ENCODE measurements at regions of chr21 and their contacts with region 1.

Region 1: GRCh38 chr21:23950344-23950743 is 1656.9 kb downstream of the MRPL39 start:
- DNase-seq: no peak
- ATAC-seq: no peak
- H3K4me3 ChIP-seq: no peak overlapping the region
- H3K27ac ChIP-seq: no peak overlapping the region
- H3K4me1 ChIP-seq: no peaks in the 10 kb centered on the region
- H3K27me3 ChIP-seq: no peaks in the 10 kb centered on the region
- CTCF ChIP-seq: no peak
- POLR2A ChIP-seq: no peak
- RAD21 ChIP-seq: no peak

Region 2: DNA sequence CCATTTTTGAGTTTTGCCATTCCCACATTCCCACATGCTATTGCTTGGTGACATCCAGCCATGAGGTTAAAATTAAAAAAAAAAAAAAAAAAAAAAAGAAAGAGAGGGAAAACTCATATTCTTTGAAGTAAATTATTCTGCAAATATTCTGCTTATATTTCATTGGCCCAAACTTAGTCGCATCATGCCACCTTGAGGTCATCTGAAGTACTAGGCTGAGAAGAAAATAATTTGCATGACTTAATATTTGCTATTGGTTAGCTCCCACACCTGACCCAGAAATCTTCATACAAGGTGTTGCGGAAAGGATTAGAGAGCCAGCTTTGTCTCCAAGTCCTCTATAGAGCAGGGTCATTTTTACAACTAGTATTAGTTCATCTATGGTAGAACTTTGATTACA is 549.1 kb before region 1 on chr21:
- CTCF ChIA-PET with region 1: no interaction called
- POLR2A ChIA-PET with region 1: no interaction called
- dilution Hi-C with region 1: no loop called
- in situ Hi-C with region 1: no loop called
- intact Hi-C with region 1: no loop called
- DNase-seq: no peak
- ATAC-seq: no peak
- H3K4me3 ChIP-seq: no peak overlapping the region
- H3K27ac ChIP-seq: no peak overlapping the region
- H3K4me1 ChIP-seq: no peaks in the 10 kb centered on the region
- H3K27me3 ChIP-seq: no peaks in the 10 kb centered on the region
- CTCF ChIP-seq: no peak
- POLR2A ChIP-seq: no peak
- RAD21 ChIP-seq: no peak

Region 3: DNA sequence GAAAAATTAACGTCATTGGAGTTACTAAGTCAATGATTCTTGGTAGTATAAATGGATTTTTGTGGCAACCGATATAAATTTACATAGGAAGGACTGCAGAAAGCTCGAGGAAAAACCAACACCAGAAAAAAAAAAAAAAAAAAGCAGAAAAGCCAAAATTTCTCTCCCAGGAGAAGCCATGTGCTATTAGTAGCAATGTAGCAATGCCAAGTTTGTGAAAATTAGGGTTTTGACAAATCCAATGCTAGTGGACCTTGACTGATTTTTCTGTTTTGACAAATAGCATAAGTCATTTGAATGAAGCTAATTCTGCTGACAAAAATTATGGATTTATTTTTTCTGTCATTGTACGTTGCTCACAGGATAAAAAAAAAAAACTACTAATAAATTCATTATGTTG is 95.0 kb after region 1 on chr21:
- CTCF ChIA-PET with region 1: no interaction called
- POLR2A ChIA-PET with region 1: interaction called, 15 read pairs
- dilution Hi-C with region 1: no loop called
- in situ Hi-C with region 1: no loop called
- intact Hi-C with region 1: no loop called
- DNase-seq: no peak
- ATAC-seq: no peak
- H3K4me3 ChIP-seq: no peak overlapping the region
- H3K27ac ChIP-seq: no peak overlapping the region
- H3K4me1 ChIP-seq: no peaks in the 10 kb centered on the region
- H3K27me3 ChIP-seq: no peaks in the 10 kb centered on the region
- CTCF ChIP-seq: no peak
- POLR2A ChIP-seq: no peak
- RAD21 ChIP-seq: no peak

Measured in IMR-90 (cell line).